ENCODE measurements at regions of chr3 and their contacts with region 1.

Region 1: GRCh38 chr3:59575113-59576001 is 525.5 kb upstream of the CFAP20DC start:
- DNase-seq: peak; percentile 53
- ATAC-seq: peak; percentile 91
- H3K4me3 ChIP-seq: no peak overlapping the region
- H3K27ac ChIP-seq: no peak overlapping the region
- H3K4me1 ChIP-seq: no peaks in the 10 kb centered on the region
- H3K27me3 ChIP-seq: no peaks in the 10 kb centered on the region
- CTCF ChIP-seq: peak; percentile 89
- EP300 ChIP-seq: no peak
- POLR2A ChIP-seq: no peak
- RAD21 ChIP-seq: peak; percentile 83

Region 2: GRCh38 chr3:59212128-59212779 is 363.1 kb before region 1 on chr3:
- CTCF ChIA-PET with region 1: no interaction called
- POLR2A ChIA-PET with region 1: no interaction called
- in situ Hi-C with region 1: no loop called
- intact Hi-C with region 1: loop called (anchors 10 kb)
- DNase-seq: peak; percentile 26
- ATAC-seq: peak; percentile 81
- H3K4me3 ChIP-seq: no peak overlapping the region
- H3K27ac ChIP-seq: no peak overlapping the region
- H3K4me1 ChIP-seq: no peaks in the 10 kb centered on the region
- H3K27me3 ChIP-seq: peaks cover 0 to 3% of the 10 kb centered on the region in 2 experiments; a peak in 1 of 5 replicates
- CTCF ChIP-seq: peak; percentile 65
- EP300 ChIP-seq: no peak
- POLR2A ChIP-seq: no peak
- RAD21 ChIP-seq: no peak

Region 3: DNA sequence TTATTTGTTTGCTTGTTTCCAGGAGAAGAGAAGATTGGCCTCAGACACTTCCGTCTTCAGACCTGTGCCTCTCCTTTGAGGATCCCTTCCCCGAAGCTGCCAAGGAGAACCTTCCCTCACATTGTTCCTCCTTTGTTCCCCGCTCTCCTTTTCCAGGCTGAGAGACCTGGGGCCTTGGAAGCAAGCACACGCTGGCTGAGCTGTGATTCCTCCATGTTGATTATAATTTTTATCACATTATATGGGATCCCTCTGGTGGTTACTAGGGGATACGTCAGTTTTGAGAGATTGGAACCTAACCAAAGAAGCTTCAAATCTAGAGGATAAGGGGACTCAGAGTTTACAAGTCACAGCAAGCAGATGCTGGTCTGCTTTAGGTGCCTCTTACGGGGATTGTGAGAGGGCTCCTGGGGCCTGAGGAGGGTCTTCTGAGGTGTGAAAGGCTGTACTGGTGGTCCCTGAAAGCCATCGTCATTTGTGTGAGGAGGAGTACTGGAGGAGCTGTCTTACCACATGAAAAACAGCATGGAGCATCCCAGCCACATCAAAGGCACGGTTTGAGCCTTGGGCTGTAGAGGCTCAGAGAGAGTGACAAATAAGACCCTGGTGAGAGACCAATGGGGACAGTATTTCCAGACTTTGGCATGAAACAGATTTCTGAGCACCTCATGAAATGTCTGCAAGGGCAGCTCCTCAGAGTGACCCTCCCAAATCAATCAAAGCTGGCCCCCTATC is 234.5 kb after region 1 on chr3:
- CTCF ChIA-PET with region 1: no interaction called
- POLR2A ChIA-PET with region 1: no interaction called
- in situ Hi-C with region 1: no loop called
- intact Hi-C with region 1: loop called (anchors 1 kb)
- DNase-seq: no peak
- ATAC-seq: no peak; the same call in 2 of the 3 replicates
- H3K4me3 ChIP-seq: no peak overlapping the region
- H3K27ac ChIP-seq: no peak overlapping the region
- H3K4me1 ChIP-seq: no peaks in the 10 kb centered on the region
- H3K27me3 ChIP-seq: no peaks in the 10 kb centered on the region
- CTCF ChIP-seq: no peak
- EP300 ChIP-seq: no peak
- POLR2A ChIP-seq: no peak
- RAD21 ChIP-seq: no peak

Region 4: GRCh38 chr3:59857589-59858346 is 282.4 kb after region 1 on chr3:
- CTCF ChIA-PET with region 1: interaction called, 42 read pairs
- POLR2A ChIA-PET with region 1: no interaction called
- in situ Hi-C with region 1: loop called (anchors 5 kb)
- intact Hi-C with region 1: loop called (anchors 1 kb)
- DNase-seq: peak; percentile 70
- ATAC-seq: peak; percentile 99
- H3K4me3 ChIP-seq: no peak overlapping the region
- H3K27ac ChIP-seq: no peak overlapping the region
- H3K4me1 ChIP-seq: no peaks in the 10 kb centered on the region
- H3K27me3 ChIP-seq: no peaks in the 10 kb centered on the region
- CTCF ChIP-seq: peak; percentile 81
- EP300 ChIP-seq: no peak
- POLR2A ChIP-seq: no peak
- RAD21 ChIP-seq: peak; percentile 70

Measured in HepG2 (cell line).